Naive thymus-derived CD4-positive, alpha-beta T cell (primary cell): ENCODE measurements at regions of chr11 and their contacts with region 1.

Region 1: GRCh38 chr11:86041975-86042378 is 26.9 kb downstream of the PICALM start:
- DNase-seq: peak in 7 of 9 donors; percentile 63 to 79 (median 71)
- ATAC-seq: peak; percentile 98
- H3K4me3 ChIP-seq: no peak overlapping the region
- H3K4me3 Mint-ChIP-seq: peak overlapping the region in 4 of 10 donors; percentile 1 to 8 (median 5)
- H3K27ac ChIP-seq: peak overlapping the region; percentile 20
- H3K27ac Mint-ChIP-seq: peak overlapping the region in 7 of 9 donors; percentile 11 to 68 (median 38)
- H3K4me1 ChIP-seq: peaks cover 19 to 54% of the 10 kb centered on the region in 2 donors
- H3K4me1 Mint-ChIP-seq: peaks cover 49 to 73% (median 67%) of the 10 kb centered on the region in 7 donors
- H3K27me3 ChIP-seq: no peaks in the 10 kb centered on the region
- H3K27me3 Mint-ChIP-seq: no peaks in the 10 kb centered on the region

Region 2: GRCh38 chr11:85694386-85694980 is 347.5 kb before region 1 on chr11:
- CTCF ChIA-PET with region 1: interaction called, 5 read pairs
- POLR2A ChIA-PET with region 1: no interaction called
- intact Hi-C with region 1: loop called in 1 of 2 experiments (anchors 5 kb)
- DNase-seq: peak in 7 of 9 donors; percentile 36 to 63 (median 55)
- ATAC-seq: peak; percentile 70
- H3K4me3 ChIP-seq: no peak overlapping the region
- H3K4me3 Mint-ChIP-seq: no peak overlapping the region
- H3K27ac ChIP-seq: no peak overlapping the region
- H3K27ac Mint-ChIP-seq: peak overlapping the region in 1 of 9 donors; percentile 12
- H3K4me1 ChIP-seq: peaks cover 2 to 7% of the 10 kb centered on the region in 2 donors
- H3K4me1 Mint-ChIP-seq: peaks cover 2 to 52% (median 8%) of the 10 kb centered on the region in 7 donors
- H3K27me3 ChIP-seq: no peaks in the 10 kb centered on the region
- H3K27me3 Mint-ChIP-seq: peaks cover 0 to 3% (median 0%) of the 10 kb centered on the region in 5 donors

Region 3: DNA sequence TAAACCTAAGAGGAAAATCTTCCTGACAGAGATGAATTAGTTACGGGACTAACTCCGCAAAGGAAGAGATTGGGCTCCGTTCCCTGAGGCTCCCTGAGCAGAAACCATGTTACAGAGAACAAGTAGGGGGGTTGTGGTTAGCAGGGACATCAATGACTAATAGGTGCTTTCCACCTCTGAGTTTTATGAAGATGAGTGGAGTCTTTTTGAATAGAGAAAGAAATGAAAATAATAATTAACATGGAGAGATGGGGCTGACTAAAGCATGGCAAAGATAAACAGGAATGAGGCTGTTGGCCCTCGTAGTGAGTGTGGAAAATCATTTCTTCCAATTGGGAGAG is 74.4 kb after region 1 on chr11:
- CTCF ChIA-PET with region 1: no interaction called
- POLR2A ChIA-PET with region 1: no interaction called
- intact Hi-C with region 1: loop called (anchors 5 kb)
- DNase-seq: no peak
- ATAC-seq: peak; percentile 60
- H3K4me3 ChIP-seq: no peak overlapping the region
- H3K4me3 Mint-ChIP-seq: peak overlapping the region in 1 of 10 donors; percentile 41
- H3K27ac ChIP-seq: no peak overlapping the region
- H3K27ac Mint-ChIP-seq: peak overlapping the region in 3 of 9 donors; percentile 9 to 82 (median 58)
- H3K4me1 ChIP-seq: peaks cover 0 to 15% of the 10 kb centered on the region in 2 donors
- H3K4me1 Mint-ChIP-seq: peaks cover 0 to 21% (median 0%) of the 10 kb centered on the region in 7 donors
- H3K27me3 ChIP-seq: no peaks in the 10 kb centered on the region
- H3K27me3 Mint-ChIP-seq: peaks cover 0 to 6% (median 0%) of the 10 kb centered on the region in 5 donors

Region 4: GRCh38 chr11:86193297-86194095 is 151.5 kb after region 1 on chr11:
- CTCF ChIA-PET with region 1: interaction called, 94 read pairs
- POLR2A ChIA-PET with region 1: interaction called, 3 read pairs
- intact Hi-C with region 1: loop called (anchors 1 kb)
- DNase-seq: peak; percentile 9 to 70 (median 65)
- ATAC-seq: peak; percentile 99
- H3K4me3 ChIP-seq: peak overlapping the region; percentile 36
- H3K4me3 Mint-ChIP-seq: peak overlapping the region; percentile 71 to 94 (median 88)
- H3K27ac ChIP-seq: no peak overlapping the region
- H3K27ac Mint-ChIP-seq: peak overlapping the region; percentile 21 to 91 (median 67)
- H3K4me1 ChIP-seq: peaks cover 5 to 7% of the 10 kb centered on the region in 2 donors
- H3K4me1 Mint-ChIP-seq: peaks cover 13 to 24% (median 15%) of the 10 kb centered on the region in 7 donors
- H3K27me3 ChIP-seq: no peaks in the 10 kb centered on the region
- H3K27me3 Mint-ChIP-seq: peaks cover 0 to 10% (median 3%) of the 10 kb centered on the region in 5 donors

Region 5: GRCh38 chr11:86218125-86219084 is 176.4 kb after region 1 on chr11:
- CTCF ChIA-PET with region 1: interaction called, 4 read pairs
- POLR2A ChIA-PET with region 1: no interaction called
- intact Hi-C with region 1: loop called (anchors 1 kb)
- DNase-seq: peak in 8 of 9 donors; percentile 17 to 54 (median 42)
- ATAC-seq: peak; percentile 92
- H3K4me3 ChIP-seq: peak overlapping the region; percentile 32
- H3K4me3 Mint-ChIP-seq: peak overlapping the region; percentile 32 to 79 (median 67)
- H3K27ac ChIP-seq: no peak overlapping the region
- H3K27ac Mint-ChIP-seq: peak overlapping the region in 2 of 9 donors; percentile 44 to 45
- H3K4me1 ChIP-seq: no peaks in the 10 kb centered on the region
- H3K4me1 Mint-ChIP-seq: peaks cover 4 to 42% (median 12%) of the 10 kb centered on the region in 7 donors
- H3K27me3 ChIP-seq: no peaks in the 10 kb centered on the region
- H3K27me3 Mint-ChIP-seq: peaks cover 0 to 12% (median 5%) of the 10 kb centered on the region in 5 donors